ENCODE measurements at regions of chr11 and their contacts with region 1.

Region 1: DNA sequence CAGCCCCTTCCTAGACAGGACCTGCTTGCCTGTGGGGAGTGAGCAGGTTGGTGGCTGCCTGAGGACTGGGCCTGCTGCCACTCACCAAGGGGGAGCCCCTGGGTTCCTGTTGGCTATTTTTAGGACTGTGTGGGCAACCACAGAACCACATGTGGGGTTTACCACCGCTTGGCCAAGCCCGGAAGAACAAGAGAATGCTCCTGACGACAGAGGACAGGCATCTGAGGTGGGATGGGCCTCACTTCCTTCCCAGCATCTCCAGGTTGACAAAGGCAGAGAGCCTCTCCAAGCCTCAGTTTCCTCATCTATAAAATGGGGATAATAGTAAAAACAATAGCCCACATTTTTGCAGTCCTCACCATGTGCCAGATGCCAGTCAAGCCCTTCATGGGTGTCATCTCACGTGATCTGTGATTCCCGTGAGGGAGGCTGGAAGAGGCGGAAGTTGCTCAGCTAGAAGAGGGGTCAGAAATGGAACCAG is 43.6 kb downstream of the LRRC32 start:
- DNase-seq: peak; percentile 69
- H3K4me3 Mint-ChIP-seq: no peak overlapping the region
- H3K27ac Mint-ChIP-seq: peak overlapping the region; percentile 94
- H3K4me1 Mint-ChIP-seq: peaks cover 51% of the 10 kb centered on the region
- H3K27me3 Mint-ChIP-seq: no peaks in the 10 kb centered on the region

Region 2: DNA sequence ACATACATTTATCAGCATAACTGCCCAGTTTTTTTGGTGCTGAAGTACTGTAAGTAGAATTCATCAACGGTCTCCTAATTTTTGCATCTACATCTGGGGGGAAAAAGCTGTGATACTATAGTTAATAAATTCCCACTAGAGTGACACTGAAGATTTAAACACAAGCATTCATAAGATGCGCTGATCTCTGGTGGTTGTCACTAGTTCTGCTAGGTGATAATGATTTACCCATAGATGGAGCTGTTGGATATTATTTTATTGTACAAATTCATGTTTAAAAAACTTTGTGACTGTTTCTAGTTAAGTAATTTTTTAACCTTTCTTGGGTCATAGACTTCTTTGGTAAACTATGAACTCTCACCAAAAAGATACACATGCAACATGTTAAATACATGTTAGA is 75.6 kb before region 1 on chr11:
- intact Hi-C with region 1: no loop called
- DNase-seq: no peak
- H3K4me3 Mint-ChIP-seq: no peak overlapping the region
- H3K27ac Mint-ChIP-seq: no peak overlapping the region
- H3K4me1 Mint-ChIP-seq: peaks cover 7% of the 10 kb centered on the region
- H3K27me3 Mint-ChIP-seq: no peaks in the 10 kb centered on the region

Region 3: DNA sequence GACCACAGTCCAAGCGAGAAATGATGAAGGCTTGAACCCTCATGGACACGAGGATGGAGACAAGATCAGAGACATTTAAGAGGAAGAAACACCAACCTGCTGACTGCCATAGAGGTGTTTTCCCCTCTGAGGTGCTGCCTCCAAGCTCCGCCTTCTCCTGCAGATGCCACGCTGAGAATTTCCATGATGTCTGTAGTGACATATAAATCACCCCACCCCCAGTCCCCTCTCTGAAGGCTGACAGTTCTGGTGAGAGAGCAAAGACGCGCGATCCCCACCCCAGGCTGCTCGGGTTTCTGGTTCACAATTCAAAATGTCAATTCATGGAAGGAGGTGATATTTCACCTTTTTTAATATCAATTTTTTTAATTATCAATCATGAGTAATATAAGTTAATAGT is 15.4 kb after region 1 on chr11:
- intact Hi-C with region 1: loop called (anchors 1 kb)
- DNase-seq: no peak
- H3K4me3 Mint-ChIP-seq: no peak overlapping the region
- H3K27ac Mint-ChIP-seq: peak overlapping the region; percentile 81
- H3K4me1 Mint-ChIP-seq: peaks cover 35% of the 10 kb centered on the region
- H3K27me3 Mint-ChIP-seq: peaks cover 34% of the 10 kb centered on the region

Region 4: DNA sequence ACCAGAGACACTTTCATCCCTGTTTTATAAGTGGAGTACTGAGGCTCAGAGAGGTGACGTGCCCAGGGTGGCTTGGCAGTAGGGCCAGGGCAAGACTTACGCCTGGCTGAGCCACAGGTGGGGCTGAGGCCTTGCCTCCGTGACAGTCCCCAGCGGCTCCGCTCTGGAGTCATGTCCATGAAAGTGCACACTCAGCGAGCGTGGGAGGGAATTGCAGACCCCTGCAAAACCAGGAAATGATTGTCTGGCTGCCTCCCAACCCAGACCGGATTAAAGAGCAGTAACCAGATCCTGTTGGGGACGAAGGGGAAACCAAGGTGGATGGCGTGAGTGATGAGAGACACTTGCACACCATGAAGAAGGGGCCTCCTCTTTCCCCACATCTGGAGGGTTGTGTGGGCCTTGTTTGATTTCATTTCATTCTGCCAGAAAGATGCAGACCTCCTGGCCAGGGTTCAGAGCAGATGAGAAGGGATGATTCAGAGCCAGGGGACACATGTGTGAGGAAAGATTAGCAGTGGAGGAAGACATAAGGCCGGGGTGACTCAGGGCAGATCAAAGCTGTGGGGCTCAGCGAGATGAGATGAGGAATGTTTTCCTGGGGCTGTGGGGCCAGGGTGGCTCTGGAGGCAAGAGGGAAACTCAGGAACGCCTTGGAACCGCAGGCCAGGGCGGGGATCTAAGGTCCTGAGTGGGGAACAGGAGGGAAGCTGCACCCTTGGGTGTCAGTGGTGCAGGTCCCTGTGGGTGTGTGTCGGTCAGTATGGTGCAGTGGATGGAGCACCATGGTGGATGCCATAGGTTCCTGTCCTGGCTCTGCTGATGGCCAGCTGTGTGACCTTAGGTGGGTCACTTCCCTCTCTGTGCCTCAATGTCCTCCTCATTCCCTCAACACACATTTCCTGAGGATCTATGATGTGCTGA is 73.5 kb after region 1 on chr11:
- intact Hi-C with region 1: no loop called
- DNase-seq: no peak
- H3K4me3 Mint-ChIP-seq: no peak overlapping the region
- H3K27ac Mint-ChIP-seq: no peak overlapping the region
- H3K4me1 Mint-ChIP-seq: peaks cover 10% of the 10 kb centered on the region
- H3K27me3 Mint-ChIP-seq: peaks cover 9% of the 10 kb centered on the region